HepG2 (cell line): ENCODE measurements at regions of chr5 and their contacts with region 1.

Region 1: GRCh38 chr5:32444431-32445286 is at the start of gene ZFR:
- DNase-seq: peak; percentile 83
- ATAC-seq: peak; percentile 96
- H3K4me3 ChIP-seq: peak within 1 kb of the TSS; percentile 91 to 97 (median 94)
- H3K27ac ChIP-seq: peak within 1 kb of the TSS; percentile 86
- H3K4me1 ChIP-seq: peaks cover 41% of the 10 kb centered on the region
- H3K27me3 ChIP-seq: no peaks in the 10 kb centered on the region; a peak in 1 of 5 replicates
- CTCF ChIP-seq: peak; percentile 13; the same call in 1 of the 2 replicates
- EP300 ChIP-seq: no peak
- POLR2A ChIP-seq: peak; percentile 92 to 93
- RAD21 ChIP-seq: peak; percentile 15; the same call in 1 of the 2 replicates
- total RNA-seq, gene ZFR: 89.0 and 139 TPM in 2 replicates

Region 2: DNA sequence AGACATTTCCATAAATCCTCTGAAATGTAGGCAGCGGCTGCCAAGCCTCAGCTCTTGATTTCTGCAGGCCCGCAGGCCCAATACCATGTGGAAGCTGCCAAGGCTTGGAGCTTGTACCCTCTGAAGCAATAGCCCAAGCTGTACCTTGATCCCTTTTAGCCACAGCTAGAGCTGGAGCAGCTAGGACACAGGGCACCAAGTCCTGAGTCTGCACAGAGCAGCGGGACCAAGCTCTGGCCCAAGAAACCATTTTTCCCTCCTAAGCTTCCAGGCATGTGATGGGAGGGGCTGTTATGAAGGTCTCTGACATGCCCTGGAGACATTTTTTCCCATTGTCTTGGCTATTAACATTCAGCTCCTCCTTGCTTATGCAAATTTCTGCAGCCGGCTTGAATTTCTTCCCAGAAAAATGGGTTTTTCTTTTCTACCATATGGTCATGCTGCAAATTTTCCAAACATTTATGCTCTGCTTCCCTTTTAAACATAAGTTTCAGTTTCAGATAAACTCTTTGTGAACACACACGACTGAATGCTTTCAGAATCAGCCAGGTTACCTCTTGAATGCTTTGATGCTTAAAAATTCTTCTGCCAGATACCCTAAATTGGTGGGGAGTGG is 14.3 kb after region 1 on chr5:
- CTCF ChIA-PET with region 1: no interaction called
- POLR2A ChIA-PET with region 1: interaction called, 11 read pairs
- in situ Hi-C with region 1: no loop called
- intact Hi-C with region 1: no loop called
- DNase-seq: peak; percentile 62
- ATAC-seq: peak; percentile 98
- H3K4me3 ChIP-seq: 0 out of 6 replicates have a peak overlapping the region, but pooled peaks of 1 of the 3 experiments have one; percentile 2
- H3K27ac ChIP-seq: no peak overlapping the region
- H3K4me1 ChIP-seq: peaks cover 19% of the 10 kb centered on the region
- H3K27me3 ChIP-seq: peaks cover 0 to 6% of the 10 kb centered on the region in 2 experiments; a peak in 3 of 5 replicates
- CTCF ChIP-seq: no peak
- EP300 ChIP-seq: peak in 1 of 2 experiments; percentile 39; a peak in 1 of 4 replicates
- POLR2A ChIP-seq: peak in 1 of 2 experiments; percentile 38; a peak in 1 of 4 replicates
- RAD21 ChIP-seq: no peak